CD4-positive, alpha-beta T cell (primary cell): ENCODE measurements at regions of chr2 and their contacts with region 1.

Region 1: DNA sequence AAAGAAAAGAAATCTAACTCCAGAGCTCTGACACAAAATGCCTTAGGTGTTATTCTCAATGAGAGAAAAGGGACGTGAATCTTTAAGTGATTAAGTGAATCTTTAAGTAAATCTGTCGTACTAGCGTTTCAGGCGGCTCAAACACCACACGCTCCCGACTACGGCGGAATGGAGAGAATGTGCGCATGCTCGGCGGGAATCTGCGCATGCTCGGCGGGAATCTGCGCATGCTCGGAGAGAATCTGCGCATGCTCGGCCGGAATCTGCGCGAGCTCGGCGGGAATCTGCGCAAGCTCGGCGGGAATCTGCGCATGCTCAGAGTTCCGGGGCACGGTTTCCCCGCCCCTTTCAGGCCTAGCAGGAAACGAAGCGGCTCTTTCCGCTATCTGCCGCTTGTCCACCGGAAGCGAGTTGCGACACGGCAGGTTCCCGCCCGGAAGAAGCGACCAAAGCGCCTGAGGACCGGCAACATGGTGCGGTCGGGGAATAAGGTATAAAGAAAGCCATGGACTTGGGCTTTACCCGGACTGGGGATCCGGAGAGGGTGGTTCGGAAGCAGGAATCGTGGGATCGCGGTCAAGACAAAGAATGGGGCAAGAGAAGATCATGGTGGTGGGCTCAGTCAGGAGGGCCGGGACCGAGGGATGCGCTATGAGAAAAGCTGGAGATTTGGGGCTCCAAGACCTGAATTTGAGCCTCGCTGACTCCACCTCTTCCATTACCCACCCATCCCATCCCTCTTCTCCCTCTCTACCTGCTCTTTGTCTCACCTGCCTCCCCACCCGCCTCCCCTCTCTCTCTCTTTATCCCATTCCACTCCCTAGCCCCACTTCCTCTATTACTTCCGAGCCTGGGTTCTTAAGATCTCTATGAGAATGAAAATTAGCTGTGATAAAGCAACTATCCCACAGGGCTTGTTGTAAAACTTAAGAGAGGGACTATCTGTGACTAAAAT is at the start of gene XRCC5:
- DNase-seq: peak; percentile 94 to 100 (median 98)
- ATAC-seq: peak; percentile 82
- H3K4me3 ChIP-seq: peak within 1 kb of the TSS; percentile 82
- H3K4me3 Mint-ChIP-seq: peak within 1 kb of the TSS; percentile 100
- H3K27ac ChIP-seq: peak within 1 kb of the TSS; percentile 88 to 94
- H3K27ac Mint-ChIP-seq: peak within 1 kb of the TSS; percentile 97
- H3K4me1 ChIP-seq: peaks cover 36% of the 10 kb centered on the region
- H3K4me1 Mint-ChIP-seq: peaks cover 57% of the 10 kb centered on the region
- H3K27me3 ChIP-seq: no peaks in the 10 kb centered on the region
- H3K27me3 Mint-ChIP-seq: no peaks in the 10 kb centered on the region
- CTCF ChIP-seq: no peak
- total RNA-seq, gene XRCC5: 126 to 129 TPM

Region 2: GRCh38 chr2:216006164-216006663 is 103.0 kb before region 1 on chr2:
- CTCF ChIA-PET with region 1: no interaction called
- POLR2A ChIA-PET with region 1: no interaction called
- intact Hi-C with region 1: no loop called
- DNase-seq: peak in 7 of 14 experiments; percentile 8 to 55 (median 47)
- ATAC-seq: peak; percentile 51
- H3K4me3 ChIP-seq: peak overlapping the region; percentile 3
- H3K4me3 Mint-ChIP-seq: no peak overlapping the region
- H3K27ac ChIP-seq: no peak overlapping the region
- H3K27ac Mint-ChIP-seq: peak overlapping the region; percentile 2
- H3K4me1 ChIP-seq: peaks cover 34% of the 10 kb centered on the region
- H3K4me1 Mint-ChIP-seq: peaks cover 44% of the 10 kb centered on the region
- H3K27me3 ChIP-seq: no peaks in the 10 kb centered on the region
- H3K27me3 Mint-ChIP-seq: no peaks in the 10 kb centered on the region
- CTCF ChIP-seq: no peak

Region 3: GRCh38 chr2:216057688-216058193 is 51.5 kb before region 1 on chr2:
- CTCF ChIA-PET with region 1: interaction called, 3 read pairs
- POLR2A ChIA-PET with region 1: interaction called, 31 read pairs
- intact Hi-C with region 1: loop called in 1 of 2 experiments (anchors 10 kb)
- DNase-seq: peak; percentile 40 to 84 (median 54)
- ATAC-seq: peak; percentile 96
- H3K4me3 ChIP-seq: peak overlapping the region; percentile 36
- H3K4me3 Mint-ChIP-seq: peak overlapping the region; percentile 76
- H3K27ac ChIP-seq: peak overlapping the region; percentile 70 to 86
- H3K27ac Mint-ChIP-seq: peak overlapping the region; percentile 99
- H3K4me1 ChIP-seq: peaks cover 11% of the 10 kb centered on the region
- H3K4me1 Mint-ChIP-seq: peaks cover 42% of the 10 kb centered on the region
- H3K27me3 ChIP-seq: no peaks in the 10 kb centered on the region
- H3K27me3 Mint-ChIP-seq: no peaks in the 10 kb centered on the region
- CTCF ChIP-seq: no peak

Region 4: GRCh38 chr2:216071111-216071851 is 38.0 kb before region 1 on chr2:
- CTCF ChIA-PET with region 1: interaction called, 4 read pairs
- POLR2A ChIA-PET with region 1: no interaction called
- intact Hi-C with region 1: loop called in 1 of 2 experiments (anchors 5 kb)
- DNase-seq: no peak
- ATAC-seq: no peak
- H3K4me3 ChIP-seq: no peak overlapping the region
- H3K4me3 Mint-ChIP-seq: no peak overlapping the region
- H3K27ac ChIP-seq: no peak overlapping the region
- H3K27ac Mint-ChIP-seq: no peak overlapping the region
- H3K4me1 ChIP-seq: peaks cover 7% of the 10 kb centered on the region
- H3K4me1 Mint-ChIP-seq: peaks cover 54% of the 10 kb centered on the region
- H3K27me3 ChIP-seq: no peaks in the 10 kb centered on the region
- H3K27me3 Mint-ChIP-seq: no peaks in the 10 kb centered on the region
- CTCF ChIP-seq: no peak

Region 5: DNA sequence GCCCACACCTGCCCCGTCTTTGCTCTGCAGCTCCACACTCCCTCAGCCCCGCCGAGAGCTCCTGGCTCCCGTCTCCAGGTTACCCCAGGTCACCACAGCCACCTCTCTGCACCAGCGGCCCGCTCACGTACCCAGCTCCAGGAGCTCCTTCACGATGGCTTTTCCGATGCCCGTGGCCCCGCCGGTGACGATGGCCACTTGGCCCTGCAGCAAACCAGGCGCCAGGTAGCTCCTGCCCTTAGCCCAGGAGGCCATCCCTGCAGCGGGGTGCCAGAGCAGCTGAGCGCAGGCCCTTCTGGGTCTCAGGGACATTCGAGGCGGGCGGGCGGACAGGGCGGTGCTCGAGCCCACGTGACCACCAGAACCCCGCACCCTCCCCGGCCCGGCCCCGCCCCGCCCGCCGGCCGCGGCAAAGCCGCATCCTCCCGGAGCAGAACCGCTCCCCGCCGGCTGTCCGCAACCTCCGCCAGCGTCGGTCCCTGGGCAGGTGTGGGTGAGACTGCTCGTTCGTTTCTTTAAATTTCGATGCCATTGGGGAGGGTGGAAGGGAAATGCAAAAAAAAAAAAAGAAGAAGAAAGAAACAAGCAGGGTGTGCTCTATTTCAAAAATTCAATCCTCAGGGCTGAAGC is 27.6 kb before region 1 on chr2 and contains the starts of genes PECR and TMEM169:
- CTCF ChIA-PET with region 1: interaction called, 5 read pairs
- POLR2A ChIA-PET with region 1: interaction called, 106 read pairs
- intact Hi-C with region 1: loop called in 1 of 2 experiments (anchors 2 kb)
- DNase-seq: peak; percentile 52 to 85 (median 70)
- ATAC-seq: peak; percentile 79
- H3K4me3 ChIP-seq: peak within 1 kb of the TSS; percentile 96
- H3K4me3 Mint-ChIP-seq: peak within 1 kb of the TSS; percentile 87
- H3K27ac ChIP-seq: peak within 1 kb of the TSS; percentile 69 to 79
- H3K27ac Mint-ChIP-seq: peak within 1 kb of the TSS; percentile 82
- H3K4me1 ChIP-seq: peaks cover 49% of the 10 kb centered on the region
- H3K4me1 Mint-ChIP-seq: peaks cover 66% of the 10 kb centered on the region
- H3K27me3 ChIP-seq: no peaks in the 10 kb centered on the region
- H3K27me3 Mint-ChIP-seq: no peaks in the 10 kb centered on the region
- CTCF ChIP-seq: no peak
- total RNA-seq, gene PECR: 9.1 to 10.3 TPM
- total RNA-seq, gene TMEM169: 0.27 to 0.53 TPM

Region 6: DNA sequence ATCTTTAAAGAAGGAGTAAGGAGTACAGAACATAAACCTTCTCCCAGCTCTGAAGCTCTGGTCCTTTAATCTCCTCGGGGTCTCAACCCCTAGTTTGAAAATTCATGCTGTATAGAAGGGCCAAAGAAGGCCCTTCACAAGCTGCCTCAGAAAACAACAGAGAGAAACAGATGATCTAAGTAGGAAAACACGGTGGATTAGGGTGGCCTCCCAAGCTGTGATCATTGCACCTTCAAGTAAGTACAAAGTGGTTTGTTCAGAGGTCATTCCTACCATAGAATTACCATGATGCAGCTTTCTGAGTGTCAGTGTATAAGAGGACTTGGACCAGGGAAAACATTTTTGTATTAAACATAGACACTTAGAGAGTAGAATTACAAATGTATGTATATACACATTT is 16.6 kb before region 1 on chr2:
- CTCF ChIA-PET with region 1: interaction called, 3 read pairs
- POLR2A ChIA-PET with region 1: interaction called, 14 read pairs
- intact Hi-C with region 1: no loop called
- DNase-seq: no peak
- ATAC-seq: no peak
- H3K4me3 ChIP-seq: no peak overlapping the region
- H3K4me3 Mint-ChIP-seq: no peak overlapping the region
- H3K27ac ChIP-seq: no peak overlapping the region
- H3K27ac Mint-ChIP-seq: no peak overlapping the region
- H3K4me1 ChIP-seq: no peaks in the 10 kb centered on the region
- H3K4me1 Mint-ChIP-seq: peaks cover 9% of the 10 kb centered on the region
- H3K27me3 ChIP-seq: no peaks in the 10 kb centered on the region
- H3K27me3 Mint-ChIP-seq: no peaks in the 10 kb centered on the region
- CTCF ChIP-seq: no peak